Panc1 (cell line): ENCODE measurements at regions of chr17 and their contacts with region 1.

Region 1: GRCh38 chr17:29180034-29180787 is at the start of gene MYO18A:
- DNase-seq: no peak
- ATAC-seq: peak; percentile 86
- H3K4me3 ChIP-seq: peak within 1 kb of the TSS; percentile 54 to 65
- H3K27ac ChIP-seq: peak within 1 kb of the TSS; percentile 83
- H3K4me1 ChIP-seq: peaks cover 36% of the 10 kb centered on the region
- H3K27me3 ChIP-seq: no peaks in the 10 kb centered on the region
- CTCF ChIP-seq: peak; percentile 94
- total RNA-seq, gene MYO18A: 108 TPM

Region 2: DNA sequence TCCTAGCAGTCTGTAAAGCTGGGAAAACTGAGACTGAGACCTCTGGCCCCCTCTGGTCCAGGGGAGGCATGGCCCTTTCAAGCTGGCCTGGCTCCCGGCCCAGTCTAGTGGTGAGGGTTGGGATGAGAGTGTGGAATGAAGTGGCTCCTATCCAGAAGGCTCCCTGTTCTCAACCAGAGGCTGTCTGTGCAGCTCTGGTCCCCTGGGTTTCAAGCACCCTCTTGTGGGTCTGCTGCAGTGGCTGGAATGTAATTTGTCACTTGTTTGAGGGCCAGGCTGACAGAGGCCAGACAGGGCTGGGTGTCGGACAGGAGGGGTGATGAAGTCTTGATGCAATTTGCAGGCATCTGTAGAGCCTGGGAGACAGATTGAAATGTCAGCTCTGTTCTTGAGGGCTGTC is 206.8 kb before region 1 on chr17:
- CTCF ChIA-PET with region 1: no interaction called
- POLR2A ChIA-PET with region 1: interaction called, 10 read pairs
- in situ Hi-C with region 1: no loop called
- intact Hi-C with region 1: no loop called
- DNase-seq: no peak
- ATAC-seq: no peak
- H3K4me3 ChIP-seq: no peak overlapping the region
- H3K27ac ChIP-seq: no peak overlapping the region
- H3K4me1 ChIP-seq: no peaks in the 10 kb centered on the region
- H3K27me3 ChIP-seq: no peaks in the 10 kb centered on the region
- CTCF ChIP-seq: no peak

Region 3: DNA sequence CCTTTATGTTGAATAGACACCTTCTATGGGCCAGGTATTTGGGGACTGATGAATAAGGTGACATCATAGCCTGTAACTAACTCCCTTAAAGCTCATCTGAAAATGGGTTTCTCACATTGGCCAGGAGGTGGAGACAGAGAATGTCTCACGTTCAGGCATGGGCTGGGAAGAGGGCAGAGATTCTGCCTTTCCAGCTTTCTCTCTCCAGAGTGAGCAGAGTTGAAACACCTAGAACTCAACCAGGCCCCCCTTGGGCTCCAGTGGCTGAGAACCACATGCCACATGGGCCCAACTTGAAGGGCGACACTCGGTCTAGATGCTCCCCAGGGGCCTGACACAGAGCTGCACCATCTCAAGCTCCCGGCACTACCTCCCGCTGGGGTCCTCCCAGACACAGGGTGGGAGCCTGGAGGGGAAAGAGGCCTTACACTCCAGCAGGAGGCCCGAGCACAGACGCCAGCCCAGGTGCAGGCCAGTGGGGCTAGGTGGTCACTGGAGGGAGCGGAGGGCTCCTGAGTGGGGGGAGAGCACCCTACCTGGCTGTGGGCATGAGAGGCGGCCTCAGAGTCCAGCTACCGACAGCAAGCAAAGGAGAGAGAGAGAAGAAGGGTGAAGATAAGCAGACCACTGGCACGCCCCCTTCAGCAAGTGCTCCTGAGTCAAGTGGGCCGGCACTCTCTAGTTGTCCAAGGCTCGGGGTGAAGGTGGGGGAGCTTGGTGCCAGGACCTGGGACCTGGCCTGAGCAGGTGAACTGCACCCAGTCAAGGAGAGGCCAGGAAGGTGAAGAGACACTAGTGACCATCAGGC is 55.9 kb before region 1 on chr17:
- CTCF ChIA-PET with region 1: interaction called, 12 read pairs
- POLR2A ChIA-PET with region 1: interaction called, 10 read pairs
- in situ Hi-C with region 1: no loop called
- intact Hi-C with region 1: no loop called
- DNase-seq: no peak
- ATAC-seq: peak; percentile 90
- H3K4me3 ChIP-seq: no peak overlapping the region
- H3K27ac ChIP-seq: no peak overlapping the region
- H3K4me1 ChIP-seq: peaks cover 8% of the 10 kb centered on the region
- H3K27me3 ChIP-seq: no peaks in the 10 kb centered on the region
- CTCF ChIP-seq: no peak; the same call in 1 of the 2 replicates

Region 4: DNA sequence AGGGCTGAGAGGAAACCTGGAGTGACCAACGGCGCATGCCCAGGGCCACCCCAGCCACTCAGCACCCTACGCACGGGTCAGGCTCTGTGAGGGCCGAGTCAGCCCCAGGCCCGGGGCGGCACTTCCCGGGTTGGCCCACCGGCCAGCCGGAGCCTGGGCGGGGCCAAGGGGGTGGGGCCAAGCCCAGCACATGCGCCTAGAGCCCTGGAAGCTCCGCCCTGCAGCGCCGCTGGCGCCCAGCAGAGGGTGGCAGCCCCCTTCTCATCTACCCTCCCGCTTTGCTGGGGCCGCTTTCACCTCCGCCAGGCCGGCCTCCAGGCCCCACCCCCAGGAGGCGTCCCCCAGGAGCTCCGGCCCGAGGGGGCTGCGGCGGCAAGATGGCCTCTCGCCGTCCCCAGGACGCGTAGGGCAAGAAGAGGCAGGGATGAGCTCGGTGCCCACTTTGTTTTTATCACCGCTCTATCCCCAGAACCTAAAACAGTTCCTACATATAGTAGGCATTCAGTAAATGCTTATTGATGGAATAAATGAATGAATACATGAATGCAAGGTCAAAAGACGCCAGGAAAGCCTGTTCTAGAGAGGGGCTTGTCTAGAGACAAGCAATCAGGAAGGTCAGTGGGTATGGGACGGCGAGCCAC is 31.3 kb before region 1 on chr17:
- CTCF ChIA-PET with region 1: interaction called, 97 read pairs
- POLR2A ChIA-PET with region 1: interaction called, 7 read pairs
- in situ Hi-C with region 1: no loop called
- intact Hi-C with region 1: loop called (anchors 2 kb)
- DNase-seq: peak; percentile 63
- ATAC-seq: peak; percentile 90
- H3K4me3 ChIP-seq: peak overlapping the region; percentile 39 to 53
- H3K27ac ChIP-seq: peak overlapping the region; percentile 97
- H3K4me1 ChIP-seq: peaks cover 82% of the 10 kb centered on the region
- H3K27me3 ChIP-seq: no peaks in the 10 kb centered on the region
- CTCF ChIP-seq: peak; percentile 97

Region 5: GRCh38 chr17:29155227-29155965 is 24.8 kb before region 1 on chr17:
- CTCF ChIA-PET with region 1: interaction called, 97 read pairs
- POLR2A ChIA-PET with region 1: interaction called, 8 read pairs
- in situ Hi-C with region 1: no loop called
- intact Hi-C with region 1: no loop called
- DNase-seq: no peak
- ATAC-seq: peak; percentile 75
- H3K4me3 ChIP-seq: peak overlapping the region in 1 of 2 experiments; percentile 12; a peak in 1 of 4 replicates
- H3K27ac ChIP-seq: peak overlapping the region; percentile 97
- H3K4me1 ChIP-seq: peaks cover 100% of the 10 kb centered on the region
- H3K27me3 ChIP-seq: no peaks in the 10 kb centered on the region
- CTCF ChIP-seq: no peak

Region 6: GRCh38 chr17:29195465-29196081 is 15.4 kb after region 1 on chr17:
- CTCF ChIA-PET with region 1: interaction called, 13 read pairs
- POLR2A ChIA-PET with region 1: interaction called, 4 read pairs
- in situ Hi-C with region 1: no loop called
- intact Hi-C with region 1: no loop called
- DNase-seq: no peak
- ATAC-seq: no peak
- H3K4me3 ChIP-seq: no peak overlapping the region
- H3K27ac ChIP-seq: no peak overlapping the region
- H3K4me1 ChIP-seq: no peaks in the 10 kb centered on the region
- H3K27me3 ChIP-seq: no peaks in the 10 kb centered on the region
- CTCF ChIP-seq: no peak

Region 7: GRCh38 chr17:29219378-29220047 is 39.3 kb after region 1 on chr17:
- CTCF ChIA-PET with region 1: interaction called, 4 read pairs
- POLR2A ChIA-PET with region 1: interaction called, 5 read pairs
- in situ Hi-C with region 1: no loop called
- intact Hi-C with region 1: loop called (anchors 1 kb)
- DNase-seq: peak; percentile 41
- ATAC-seq: peak; percentile 95
- H3K4me3 ChIP-seq: peak overlapping the region in 1 of 2 experiments; percentile 24; a peak in 2 of 4 replicates
- H3K27ac ChIP-seq: peak overlapping the region; percentile 58; the same call in 1 of the 2 replicates
- H3K4me1 ChIP-seq: peaks cover 6% of the 10 kb centered on the region
- H3K27me3 ChIP-seq: no peaks in the 10 kb centered on the region
- CTCF ChIP-seq: peak; percentile 94

Region 8: DNA sequence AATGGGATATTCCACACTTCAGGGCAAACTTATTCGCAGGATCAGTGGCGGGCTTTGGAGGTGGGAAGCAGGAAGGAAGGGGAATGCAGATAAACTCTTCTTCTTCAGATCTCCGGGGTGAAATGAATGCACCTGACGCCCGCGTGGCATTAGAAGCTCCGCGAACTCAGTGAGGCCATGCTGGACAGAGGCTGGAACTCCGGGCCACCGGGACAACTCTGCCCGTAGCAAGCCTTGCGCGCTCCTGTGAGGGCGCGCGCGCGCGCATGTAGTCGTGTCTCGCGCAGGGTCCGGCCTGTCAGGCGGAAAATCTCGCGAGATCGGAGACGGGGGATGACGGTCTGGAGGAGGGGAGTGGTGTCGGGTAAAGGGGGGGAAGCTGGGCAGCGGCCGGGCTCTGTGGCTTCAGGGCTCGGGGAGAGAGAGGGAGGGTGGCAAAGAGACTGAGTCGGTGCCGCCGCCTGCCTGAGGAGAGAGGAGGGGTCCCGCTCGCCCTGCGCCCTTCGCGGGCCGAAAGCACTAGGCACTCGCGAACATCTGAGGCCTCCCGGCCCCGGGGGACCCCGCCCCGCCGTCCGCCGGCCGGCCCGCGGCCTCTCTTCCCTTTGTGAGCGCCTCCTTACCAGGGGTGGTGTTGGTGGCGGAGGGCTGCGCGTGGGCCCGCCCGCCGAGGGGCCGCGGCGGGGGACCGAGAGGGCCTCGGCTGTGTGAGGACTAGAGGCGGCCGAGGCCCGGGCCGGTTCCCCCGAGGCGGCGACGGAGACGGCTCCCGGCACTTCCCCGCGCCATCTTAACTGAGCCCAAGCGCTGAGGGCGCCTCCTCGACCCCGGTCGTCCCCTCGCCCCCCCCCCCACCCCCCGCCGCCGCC is 210.0 kb after region 1 on chr17 and contains the start of gene TAOK1:
- CTCF ChIA-PET with region 1: no interaction called
- POLR2A ChIA-PET with region 1: no interaction called
- in situ Hi-C with region 1: no loop called
- intact Hi-C with region 1: no loop called
- DNase-seq: peak; percentile 86
- ATAC-seq: peak; percentile 96
- H3K4me3 ChIP-seq: peak within 1 kb of the TSS; percentile 68 to 69
- H3K27ac ChIP-seq: peak within 1 kb of the TSS; percentile 94
- H3K4me1 ChIP-seq: peaks cover 19% of the 10 kb centered on the region; the same call in 1 of the 2 replicates
- H3K27me3 ChIP-seq: no peaks in the 10 kb centered on the region
- CTCF ChIP-seq: no peak
- total RNA-seq, gene TAOK1: 111 TPM